Stomach (tissue), 19 donors: ENCODE measurements at regions of chr20 and their contacts with region 1.

Region 1: GRCh38 chr20:3679749-3680700 is 1.8 kb downstream of the ADAM33 start:
- DNase-seq: peak; percentile 30 to 77
- H3K4me3 ChIP-seq: peak overlapping the region; percentile 51 to 56 (median 55)
- H3K27ac ChIP-seq: peak overlapping the region; percentile 54 to 87 (median 82)
- H3K4me1 ChIP-seq: peaks cover 29 to 55% (median 53%) of the 10 kb centered on the region in 4 donors
- H3K27me3 ChIP-seq: peaks cover 0 to 54% (median 28%) of the 10 kb centered on the region in 3 donors
- CTCF ChIP-seq: no peak
- EP300 ChIP-seq: no peak
- POLR2A ChIP-seq: no peak

Region 2: DNA sequence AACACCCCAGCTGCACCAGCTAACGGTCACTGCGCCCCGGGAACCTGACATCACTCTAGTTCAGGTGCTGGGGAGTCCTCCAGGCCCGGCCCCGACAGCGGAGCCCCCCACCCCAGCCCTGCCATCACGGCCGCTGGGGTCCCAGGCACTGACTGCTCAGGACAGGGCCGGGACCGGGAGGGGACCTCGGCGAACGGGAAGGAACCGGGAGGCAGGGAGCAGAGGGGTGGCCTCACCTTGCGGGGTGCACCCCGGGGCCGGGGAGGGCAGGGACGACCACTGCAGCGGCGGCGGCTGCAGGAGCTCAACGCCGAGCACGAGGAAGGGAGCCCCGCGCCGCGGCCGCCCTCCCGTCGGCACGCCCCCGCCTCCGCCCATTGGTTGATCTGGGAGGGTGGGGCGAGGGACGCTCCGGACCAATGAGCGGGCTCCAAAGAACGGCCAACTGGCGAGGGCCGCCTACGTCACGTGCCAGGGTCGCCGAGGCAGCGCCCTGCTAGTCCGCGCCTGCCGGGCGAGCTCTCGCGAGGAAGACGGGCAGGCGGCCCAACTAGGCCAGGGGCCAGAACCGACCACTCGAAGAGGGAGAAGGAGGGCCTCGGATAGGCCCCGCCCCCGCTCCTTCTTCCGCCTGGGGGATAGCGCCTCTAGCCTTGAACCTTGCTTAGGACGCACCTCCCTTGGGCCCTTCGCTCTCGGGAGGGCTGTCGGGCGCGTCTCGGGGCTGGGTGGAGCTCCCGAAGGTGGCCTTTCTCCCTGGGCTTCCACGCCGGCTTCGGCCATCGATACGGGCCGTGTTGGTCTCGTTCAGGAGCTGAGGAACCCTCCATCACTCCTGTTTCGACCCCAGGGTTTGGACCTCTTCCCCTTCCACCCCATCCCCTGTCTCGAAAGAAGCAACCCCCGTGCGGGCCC is 87.7 kb after region 1 on chr20 and contains the start of gene ADISSP:
- intact Hi-C with region 1: loop called (anchors 10 kb)
- DNase-seq: peak; percentile 99 to 100
- H3K4me3 ChIP-seq: peak within 1 kb of the TSS; percentile 73 to 88 (median 80)
- H3K27ac ChIP-seq: peak within 1 kb of the TSS; percentile 87 to 95 (median 93)
- H3K4me1 ChIP-seq: peaks cover 26 to 58% (median 50%) of the 10 kb centered on the region in 4 donors
- H3K27me3 ChIP-seq: no peaks in the 10 kb centered on the region
- CTCF ChIP-seq: no peak
- EP300 ChIP-seq: no peak
- POLR2A ChIP-seq: peak in 1 of 4 donors; percentile 22
- total RNA-seq, gene ADISSP: 5.9 to 136 (median 49.0) TPM

Region 3: DNA sequence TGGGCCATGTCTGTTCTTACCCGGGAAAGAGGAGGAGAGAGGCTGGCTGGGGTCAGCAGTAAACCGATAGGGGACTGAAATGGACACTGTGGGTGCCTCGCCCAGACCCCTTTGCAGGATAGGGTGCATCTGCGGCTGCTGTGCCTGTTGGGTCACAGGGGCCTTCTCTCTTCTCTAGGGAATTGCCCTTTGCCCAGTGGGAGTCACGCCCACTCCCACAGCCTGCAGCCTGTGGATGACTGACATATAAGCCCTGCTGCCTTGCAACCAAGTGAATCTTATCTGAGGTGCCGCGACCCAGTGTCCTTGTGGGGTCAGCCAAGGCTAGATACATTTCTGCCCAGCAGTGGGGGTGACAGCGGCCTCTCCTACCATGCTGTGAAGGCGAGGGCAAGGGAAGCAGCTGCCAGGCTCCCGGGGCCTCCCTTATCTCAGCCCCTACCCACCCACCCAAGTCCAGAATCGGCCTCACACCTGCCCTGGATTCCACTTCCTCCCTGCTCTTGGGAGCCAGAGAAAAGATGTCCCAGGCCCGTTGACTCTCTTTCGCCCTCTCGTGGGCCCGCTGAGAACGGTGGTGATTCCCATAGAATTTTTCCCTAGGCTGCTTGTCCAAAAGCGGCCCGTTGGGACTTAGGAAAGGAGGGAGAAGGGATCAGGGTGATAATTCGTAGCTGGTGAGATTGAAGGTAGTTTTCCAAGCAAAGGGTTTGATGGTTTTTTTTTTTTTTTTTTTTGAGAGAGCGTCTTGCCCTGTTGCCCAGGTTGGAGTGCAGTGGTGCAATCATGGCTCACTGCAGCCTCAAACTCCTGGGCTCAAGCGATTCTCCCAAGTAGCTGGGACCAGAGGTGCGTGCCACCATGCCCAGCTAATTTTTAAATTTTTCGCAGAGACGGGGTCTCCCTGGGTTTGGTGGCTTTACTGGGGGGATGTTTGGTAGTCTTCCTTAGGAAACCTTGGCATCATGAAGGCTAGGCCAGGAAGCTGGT is 411.8 kb after region 1 on chr20:
- intact Hi-C with region 1: loop called (anchors 10 kb)
- DNase-seq: peak; percentile 69 to 79
- H3K4me3 ChIP-seq: no peak overlapping the region
- H3K27ac ChIP-seq: no peak overlapping the region
- H3K4me1 ChIP-seq: peaks cover 0 to 9% (median 2%) of the 10 kb centered on the region in 4 donors
- H3K27me3 ChIP-seq: no peaks in the 10 kb centered on the region
- CTCF ChIP-seq: peak in 5 of 7 experiments; percentile 46 to 63 (median 62)
- EP300 ChIP-seq: no peak
- POLR2A ChIP-seq: no peak